ENCODE measurements at regions of chr5 and their contacts with region 1.

Region 1: DNA sequence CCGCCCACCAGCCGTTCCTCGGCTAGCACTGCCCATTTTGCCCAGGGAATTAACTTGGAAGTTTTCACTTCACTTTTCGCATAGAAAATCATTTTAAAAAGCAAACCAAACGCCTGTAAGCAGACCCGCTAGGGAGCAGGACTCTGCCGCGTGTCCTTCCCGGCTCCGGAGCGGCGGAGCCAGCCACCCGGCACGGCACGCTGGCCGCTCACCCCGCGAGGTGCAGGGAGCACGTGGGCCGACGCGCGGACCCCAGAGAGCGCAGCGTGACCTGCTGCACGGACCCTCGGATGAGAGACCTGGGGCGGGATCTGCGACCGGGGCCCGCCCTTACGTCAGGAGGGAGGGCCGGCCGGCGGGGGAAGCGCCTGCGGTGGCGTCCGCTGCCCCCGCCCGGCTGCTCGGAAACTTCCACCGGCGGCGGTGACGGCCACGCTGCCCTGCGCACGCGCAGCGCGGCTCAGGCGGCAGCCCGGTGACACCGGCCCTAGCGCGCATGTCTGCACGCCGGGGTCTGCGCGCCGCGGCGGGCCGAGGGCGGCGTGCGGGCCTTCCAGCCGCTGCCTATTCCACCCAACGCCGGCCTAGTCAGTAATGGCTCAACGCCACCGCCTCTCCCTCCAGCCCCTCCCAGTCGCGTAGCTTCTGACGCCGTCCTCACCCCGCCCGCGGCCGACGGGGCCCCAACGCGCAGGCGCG is 506 bp upstream of the TENT4A start:
- DNase-seq: peak; percentile 95 to 99 (median 98)
- H3K4me3 ChIP-seq: peak overlapping the region; percentile 84
- H3K4me3 Mint-ChIP-seq: peak overlapping the region; percentile 88 to 98 (median 91)
- H3K27ac ChIP-seq: peak overlapping the region; percentile 85
- H3K27ac Mint-ChIP-seq: peak overlapping the region; percentile 91 to 98 (median 94)
- H3K4me1 ChIP-seq: peaks cover 31% of the 10 kb centered on the region
- H3K4me1 Mint-ChIP-seq: peaks cover 35 to 42% (median 41%) of the 10 kb centered on the region in 3 donors
- H3K27me3 ChIP-seq: no peaks in the 10 kb centered on the region
- H3K27me3 Mint-ChIP-seq: no peaks in the 10 kb centered on the region

Region 2: GRCh38 chr5:6632917-6633468 is 79.7 kb before region 1 on chr5 and contains the starts of genes NSUN2 and SRD5A1:
- CTCF ChIA-PET with region 1: interaction called, 7 read pairs
- POLR2A ChIA-PET with region 1: interaction called, 20 read pairs
- DNase-seq: peak; percentile 89 to 96 (median 94)
- H3K4me3 ChIP-seq: peak within 1 kb of the TSS; percentile 90
- H3K4me3 Mint-ChIP-seq: peak within 1 kb of the TSS; percentile 88 to 98 (median 95)
- H3K27ac ChIP-seq: peak within 1 kb of the TSS; percentile 94
- H3K27ac Mint-ChIP-seq: peak within 1 kb of the TSS; percentile 96 to 100 (median 99)
- H3K4me1 ChIP-seq: peaks cover 19% of the 10 kb centered on the region
- H3K4me1 Mint-ChIP-seq: peaks cover 43 to 61% (median 49%) of the 10 kb centered on the region in 3 donors
- H3K27me3 ChIP-seq: no peaks in the 10 kb centered on the region
- H3K27me3 Mint-ChIP-seq: peaks cover 0 to 2% of the 10 kb centered on the region in 2 donors
- total RNA-seq, gene NSUN2: 120 to 124 TPM
- total RNA-seq, gene SRD5A1: 16.2 to 17.1 TPM

Region 3: GRCh38 chr5:6792911-6793471 is 80.3 kb after region 1 on chr5:
- CTCF ChIA-PET with region 1: no interaction called
- POLR2A ChIA-PET with region 1: no interaction called
- DNase-seq: no peak
- H3K4me3 ChIP-seq: no peak overlapping the region
- H3K4me3 Mint-ChIP-seq: peak overlapping the region in 1 of 7 donors; percentile 14
- H3K27ac ChIP-seq: no peak overlapping the region
- H3K27ac Mint-ChIP-seq: peak overlapping the region in 1 of 8 donors; percentile 48
- H3K4me1 ChIP-seq: no peaks in the 10 kb centered on the region
- H3K4me1 Mint-ChIP-seq: peaks cover 0 to 5% (median 3%) of the 10 kb centered on the region in 3 donors
- H3K27me3 ChIP-seq: peaks cover 7% of the 10 kb centered on the region
- H3K27me3 Mint-ChIP-seq: peaks cover 21 to 54% of the 10 kb centered on the region in 2 donors

Region 4: GRCh38 chr5:6804766-6805501 is 92.2 kb after region 1 on chr5:
- CTCF ChIA-PET with region 1: no interaction called
- POLR2A ChIA-PET with region 1: no interaction called
- DNase-seq: no peak
- H3K4me3 ChIP-seq: no peak overlapping the region
- H3K4me3 Mint-ChIP-seq: no peak overlapping the region
- H3K27ac ChIP-seq: no peak overlapping the region
- H3K27ac Mint-ChIP-seq: no peak overlapping the region
- H3K4me1 ChIP-seq: no peaks in the 10 kb centered on the region
- H3K4me1 Mint-ChIP-seq: no peaks in the 10 kb centered on the region
- H3K27me3 ChIP-seq: no peaks in the 10 kb centered on the region
- H3K27me3 Mint-ChIP-seq: peaks cover 13 to 48% of the 10 kb centered on the region in 2 donors

Measured in CD8-positive, alpha-beta memory T cell (primary cell).